Endothelial cell of umbilical vein (primary cell): ENCODE measurements at regions of chr1 and their contacts with region 1.

Region 1: GRCh38 chr1:67500413-67500959 is 70.3 kb upstream of the SERBP1 start:
- DNase-seq: peak; percentile 77
- H3K4me3 ChIP-seq: no peak overlapping the region
- H3K27ac ChIP-seq: no peak overlapping the region
- H3K4me1 ChIP-seq: no peaks in the 10 kb centered on the region
- H3K27me3 ChIP-seq: peaks cover 6 to 14% of the 10 kb centered on the region in 2 experiments
- CTCF ChIP-seq: peak; percentile 97 to 98
- POLR2A ChIP-seq: no peak

Region 2: GRCh38 chr1:66996018-66996682 is 504.3 kb before region 1 on chr1:
- CTCF ChIA-PET with region 1: interaction called, 8 read pairs
- POLR2A ChIA-PET with region 1: no interaction called
- dilution Hi-C with region 1: no loop called
- intact Hi-C with region 1: loop called (anchors 5 kb)
- DNase-seq: peak; percentile 83
- H3K4me3 ChIP-seq: no peak overlapping the region
- H3K27ac ChIP-seq: no peak overlapping the region
- H3K4me1 ChIP-seq: no peaks in the 10 kb centered on the region
- H3K27me3 ChIP-seq: no peaks in the 10 kb centered on the region
- CTCF ChIP-seq: peak; percentile 74 to 75
- POLR2A ChIP-seq: no peak

Region 3: DNA sequence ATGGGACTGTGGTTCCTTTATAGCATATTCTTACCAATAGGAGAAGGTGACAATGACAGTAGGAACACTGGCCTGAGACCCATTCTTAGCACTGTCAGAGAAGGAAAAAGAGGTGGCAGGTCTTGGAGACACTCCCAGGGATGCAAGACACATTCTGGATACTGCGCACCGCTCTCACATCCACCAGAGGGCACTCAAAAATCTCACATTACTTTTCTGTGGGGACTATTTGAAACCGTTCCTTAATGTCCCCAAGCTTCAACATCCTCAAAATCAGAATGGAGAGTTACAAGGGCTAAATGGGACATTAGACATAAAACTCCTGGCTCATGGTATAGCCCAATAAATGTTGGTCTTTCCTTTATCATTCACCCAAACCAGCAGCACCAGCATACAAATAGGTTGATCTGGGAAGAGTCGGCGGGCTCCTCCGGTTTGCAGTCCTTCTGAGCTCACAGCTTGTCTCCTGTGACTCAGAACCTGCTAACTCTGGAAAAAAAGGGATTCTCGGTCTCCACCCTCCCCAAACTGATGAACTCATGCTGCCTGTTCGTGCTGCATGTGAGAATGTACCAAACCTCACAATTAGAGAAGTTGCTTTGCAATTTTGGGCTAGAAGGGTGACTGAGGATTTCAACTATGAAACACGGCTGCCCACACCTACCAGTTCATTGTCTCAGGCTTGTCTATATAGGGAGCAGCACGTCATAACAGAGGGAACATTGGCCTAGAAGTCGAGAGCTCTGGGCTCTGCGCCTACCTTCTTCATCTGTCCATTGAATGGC is 152.6 kb before region 1 on chr1:
- CTCF ChIA-PET with region 1: interaction called, 124 read pairs
- POLR2A ChIA-PET with region 1: no interaction called
- dilution Hi-C with region 1: no loop called
- intact Hi-C with region 1: loop called (anchors 1 kb)
- DNase-seq: peak; percentile 57
- H3K4me3 ChIP-seq: no peak overlapping the region
- H3K27ac ChIP-seq: no peak overlapping the region
- H3K4me1 ChIP-seq: no peaks in the 10 kb centered on the region
- H3K27me3 ChIP-seq: peaks cover 0 to 10% of the 10 kb centered on the region in 2 experiments
- CTCF ChIP-seq: peak; percentile 74 to 76
- POLR2A ChIP-seq: no peak

Region 4: DNA sequence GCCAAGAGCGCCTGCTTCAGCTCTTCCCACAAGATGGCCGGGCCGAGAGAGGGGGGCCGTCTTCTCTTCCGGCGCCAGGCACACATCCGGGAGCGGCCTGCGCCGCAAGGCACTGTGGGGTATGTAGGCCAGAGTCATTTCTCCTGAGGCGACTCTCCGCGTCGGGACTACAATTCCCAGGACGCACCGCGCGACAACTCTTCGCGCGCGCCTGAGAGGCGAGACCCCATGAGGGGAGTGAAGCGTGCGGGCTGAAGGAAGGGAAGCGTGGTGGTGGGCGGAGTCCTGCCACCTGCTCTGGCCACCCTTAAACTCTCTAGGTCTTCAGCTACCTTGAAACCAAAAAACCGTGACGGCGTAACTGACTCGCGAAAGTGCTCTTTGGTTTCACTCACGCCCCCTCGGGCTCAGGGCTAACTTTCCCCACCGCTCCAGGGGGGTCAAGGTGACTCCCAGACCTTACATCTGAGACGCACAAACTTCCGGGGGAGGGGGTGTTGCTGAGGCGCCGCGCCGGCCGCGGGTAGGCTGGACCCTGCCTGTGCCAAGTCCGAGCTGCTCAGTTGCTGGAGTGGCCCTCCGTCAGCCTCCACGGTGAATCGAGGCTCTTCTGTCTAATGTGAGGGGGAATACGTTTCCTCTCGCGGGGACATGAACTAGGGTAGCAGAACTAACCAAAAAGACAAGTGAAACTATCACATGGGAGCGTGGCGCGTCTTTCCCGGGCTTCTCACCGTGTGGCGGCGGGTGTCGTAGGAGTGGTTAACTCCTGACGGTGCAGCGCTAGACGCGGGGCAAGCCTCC is 69.9 kb before region 1 on chr1 and contains the start of gene SERBP1:
- CTCF ChIA-PET with region 1: interaction called, 47 read pairs
- POLR2A ChIA-PET with region 1: no interaction called
- dilution Hi-C with region 1: no loop called
- intact Hi-C with region 1: loop called (anchors 1 kb)
- DNase-seq: peak; percentile 99
- H3K4me3 ChIP-seq: peak within 1 kb of the TSS; percentile 92 to 99 (median 93)
- H3K27ac ChIP-seq: peak within 1 kb of the TSS; percentile 75
- H3K4me1 ChIP-seq: peaks cover 27% of the 10 kb centered on the region
- H3K27me3 ChIP-seq: no peaks in the 10 kb centered on the region
- CTCF ChIP-seq: no peak
- POLR2A ChIP-seq: peak; percentile 16
- total RNA-seq, gene SERBP1: 290 and 293 TPM in 2 replicates

Region 5: GRCh38 chr1:67515324-67516080 is 15.0 kb after region 1 on chr1:
- CTCF ChIA-PET with region 1: interaction called, 14 read pairs
- POLR2A ChIA-PET with region 1: no interaction called
- dilution Hi-C with region 1: no loop called
- intact Hi-C with region 1: no loop called
- DNase-seq: no peak
- H3K4me3 ChIP-seq: no peak overlapping the region
- H3K27ac ChIP-seq: no peak overlapping the region
- H3K4me1 ChIP-seq: no peaks in the 10 kb centered on the region
- H3K27me3 ChIP-seq: peaks cover 0 to 4% of the 10 kb centered on the region in 2 experiments
- CTCF ChIP-seq: no peak
- POLR2A ChIP-seq: no peak

Region 6: DNA sequence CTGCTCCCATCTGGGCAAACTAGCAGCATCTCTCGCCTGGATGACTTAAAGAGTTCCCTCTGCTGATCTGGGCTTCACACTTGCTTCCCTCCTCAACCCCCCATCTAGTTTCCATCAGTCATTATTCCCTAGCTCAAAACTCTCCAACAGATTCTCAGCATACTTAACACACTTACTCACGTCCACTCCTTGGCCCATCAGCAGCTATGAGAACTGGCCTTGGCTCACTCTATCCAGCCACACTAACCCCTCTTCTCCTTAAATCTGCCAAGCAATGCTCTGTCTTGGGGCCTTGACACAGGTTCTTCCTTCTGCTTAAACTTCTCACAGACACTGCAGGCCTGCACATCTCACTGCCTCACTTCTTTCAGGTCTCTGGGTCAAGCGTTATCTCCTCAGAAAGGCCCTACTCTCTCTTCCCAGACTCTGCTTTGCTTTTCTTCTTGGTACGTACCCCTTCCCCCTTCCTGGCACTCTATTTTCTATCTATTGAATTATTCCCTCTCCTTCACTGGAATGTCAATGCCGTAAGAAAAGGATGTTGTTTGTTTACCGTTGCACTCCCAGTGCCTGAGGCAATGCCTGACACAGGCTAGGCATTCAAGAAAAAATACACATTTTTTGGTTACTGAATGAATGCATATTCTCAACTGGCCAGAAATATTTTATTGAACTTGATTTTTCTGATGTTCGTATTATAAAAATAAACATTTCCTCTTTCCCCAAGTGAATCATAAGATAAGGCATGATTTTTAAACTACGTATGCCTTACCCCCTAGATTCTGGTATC is 291.4 kb after region 1 on chr1:
- CTCF ChIA-PET with region 1: no interaction called
- POLR2A ChIA-PET with region 1: no interaction called
- dilution Hi-C with region 1: no loop called
- intact Hi-C with region 1: no loop called
- DNase-seq: peak; percentile 87
- H3K4me3 ChIP-seq: no peak overlapping the region
- H3K27ac ChIP-seq: peak overlapping the region; percentile 92
- H3K4me1 ChIP-seq: peaks cover 96% of the 10 kb centered on the region
- H3K27me3 ChIP-seq: no peaks in the 10 kb centered on the region
- CTCF ChIP-seq: no peak
- POLR2A ChIP-seq: no peak